Dorsolateral prefrontal cortex (tissue), 120 donors: ENCODE measurements at regions of chr18 and their contacts with region 1.

Region 1: GRCh38 chr18:6509832-6510231 is 95.1 kb upstream of the L3MBTL4 start:
- DNase-seq: no peak
- H3K4me3 ChIP-seq: no peak overlapping the region
- H3K27ac ChIP-seq: no peak overlapping the region
- H3K27me3 ChIP-seq: peaks cover 0 to 8% (median 0%) of the 10 kb centered on the region in 45 donors
- CTCF ChIP-seq: no peak

Region 2: DNA sequence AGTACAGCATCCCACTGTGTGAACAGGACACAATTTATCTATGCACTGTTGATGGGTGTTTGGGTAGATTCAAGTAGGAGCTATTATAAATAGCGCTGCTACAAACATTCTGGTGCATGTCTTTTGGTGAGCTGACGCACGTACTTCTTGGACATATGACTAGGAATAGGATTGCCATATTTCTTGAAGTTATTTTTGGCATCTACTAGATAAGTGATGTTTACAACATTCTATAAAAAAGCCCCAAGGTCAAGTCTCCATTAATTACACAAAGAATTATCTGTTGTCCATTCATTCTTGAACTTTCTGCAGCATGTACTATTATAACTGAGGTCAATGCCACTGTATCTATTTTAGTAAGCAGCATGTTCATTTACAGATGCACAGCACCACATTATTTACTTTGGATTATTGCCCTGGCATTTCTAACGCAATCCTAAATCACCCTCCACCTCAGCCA is 389.0 kb before region 1 on chr18:
- intact Hi-C with region 1: no loop called
- DNase-seq: no peak
- H3K4me3 ChIP-seq: no peak overlapping the region
- H3K27ac ChIP-seq: no peak overlapping the region
- H3K27me3 ChIP-seq: no peaks in the 10 kb centered on the region
- CTCF ChIP-seq: no peak

Region 3: GRCh38 chr18:6449213-6449612 is 60.6 kb before region 1 on chr18:
- intact Hi-C with region 1: loop called in 1 of 2 experiments (anchors 10 kb)
- DNase-seq: no peak
- H3K4me3 ChIP-seq: no peak overlapping the region
- H3K27ac ChIP-seq: no peak overlapping the region
- H3K27me3 ChIP-seq: no peaks in the 10 kb centered on the region
- CTCF ChIP-seq: no peak